HCT116 (cell line): ENCODE measurements at regions of chr12 and their contacts with region 1.

Region 1: DNA sequence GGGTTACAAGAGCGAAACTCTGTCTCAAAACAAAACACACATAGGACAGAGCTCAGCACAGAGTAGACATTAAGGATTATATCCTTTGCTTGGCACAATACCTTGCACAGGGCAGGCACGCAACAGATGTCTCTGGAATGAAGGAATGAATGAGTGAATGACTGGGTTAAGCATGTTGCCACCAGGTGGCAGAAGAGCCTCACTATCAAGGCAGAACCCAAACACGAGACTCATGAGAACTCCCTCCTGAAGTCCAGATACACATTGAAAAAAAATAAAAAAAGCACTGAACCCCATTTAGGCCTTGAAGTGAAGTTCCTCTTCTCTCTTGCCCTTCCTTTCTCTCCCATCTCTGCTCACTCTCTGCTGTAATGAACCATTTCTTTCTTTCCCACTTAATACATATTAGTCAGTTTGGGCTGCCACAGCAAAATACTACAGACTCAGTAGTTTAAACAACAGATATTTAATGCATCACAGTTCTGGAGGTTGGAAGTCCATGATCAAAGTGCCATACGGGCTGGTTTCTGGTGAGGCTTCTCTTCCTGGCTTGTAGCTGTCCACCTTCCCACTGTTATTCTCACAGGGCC is 26.6 kb upstream of the LTA4H start:
- DNase-seq: peak; percentile 81
- ATAC-seq: peak; percentile 96
- H3K4me3 ChIP-seq: no peak overlapping the region
- H3K27ac ChIP-seq: no peak overlapping the region
- H3K4me1 ChIP-seq: no peaks in the 10 kb centered on the region
- H3K27me3 ChIP-seq: no peaks in the 10 kb centered on the region
- CTCF ChIP-seq: peak; percentile 76 to 87 (median 84)
- POLR2A ChIP-seq: no peak
- RAD21 ChIP-seq: peak; percentile 98

Region 2: DNA sequence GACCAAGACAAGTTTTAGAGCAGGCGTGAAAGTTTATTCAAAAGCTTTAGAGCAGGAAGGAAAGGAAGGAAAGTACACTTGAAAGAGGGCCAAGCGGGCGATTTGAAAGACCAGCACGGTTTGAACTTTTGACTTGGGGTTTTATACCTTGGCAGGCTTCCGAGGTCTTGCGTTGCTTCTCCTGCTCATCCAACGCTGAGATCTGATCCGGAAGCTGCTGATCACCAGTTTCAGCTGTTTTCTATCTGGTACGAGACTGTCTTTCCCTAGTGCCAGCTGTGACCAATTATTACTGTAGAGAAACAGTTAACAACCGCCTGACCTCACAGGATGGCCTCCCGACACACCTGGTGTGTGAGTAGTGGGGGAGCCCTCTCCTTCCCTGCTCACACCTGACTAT is 223.8 kb before region 1 on chr12:
- CTCF ChIA-PET with region 1: no interaction called
- POLR2A ChIA-PET with region 1: no interaction called
- RAD21 ChIA-PET with region 1: no interaction called
- intact Hi-C with region 1: no loop called
- DNase-seq: no peak
- ATAC-seq: no peak
- H3K4me3 ChIP-seq: no peak overlapping the region
- H3K27ac ChIP-seq: no peak overlapping the region
- H3K4me1 ChIP-seq: peaks cover 7 to 26% of the 10 kb centered on the region in 2 experiments; a peak in 3 of 4 replicates
- H3K27me3 ChIP-seq: no peaks in the 10 kb centered on the region
- CTCF ChIP-seq: no peak
- POLR2A ChIP-seq: no peak
- RAD21 ChIP-seq: no peak

Region 3: GRCh38 chr12:95986635-95987570 is 75.1 kb before region 1 on chr12:
- CTCF ChIA-PET with region 1: no interaction called
- POLR2A ChIA-PET with region 1: no interaction called
- RAD21 ChIA-PET with region 1: no interaction called
- intact Hi-C with region 1: no loop called
- DNase-seq: no peak
- ATAC-seq: no peak
- H3K4me3 ChIP-seq: no peak overlapping the region
- H3K27ac ChIP-seq: no peak overlapping the region
- H3K4me1 ChIP-seq: no peaks in the 10 kb centered on the region
- H3K27me3 ChIP-seq: no peaks in the 10 kb centered on the region
- CTCF ChIP-seq: no peak
- POLR2A ChIP-seq: no peak
- RAD21 ChIP-seq: no peak

Region 4: DNA sequence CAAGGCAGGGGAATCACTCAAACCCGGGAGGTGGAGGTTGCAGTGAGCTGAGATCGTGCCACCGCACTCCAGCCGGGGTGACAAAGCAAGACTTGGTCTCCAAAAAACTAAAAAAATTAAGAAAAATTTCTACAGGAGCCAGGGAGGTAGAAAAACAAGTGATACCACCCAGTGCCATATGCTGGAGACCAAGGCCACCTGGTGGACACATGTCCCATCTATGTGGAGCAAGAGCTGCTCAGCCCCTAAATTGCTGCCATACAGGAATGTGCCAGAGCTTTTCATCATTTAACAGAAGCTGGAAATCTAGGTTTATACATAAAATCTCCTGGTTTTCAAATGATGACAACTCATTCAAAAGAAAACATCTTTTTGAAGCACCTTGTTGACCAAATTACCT is 70.9 kb after region 1 on chr12:
- CTCF ChIA-PET with region 1: interaction called, 3 read pairs
- POLR2A ChIA-PET with region 1: no interaction called
- RAD21 ChIA-PET with region 1: no interaction called
- intact Hi-C with region 1: loop called (anchors 5 kb)
- DNase-seq: no peak
- ATAC-seq: peak; percentile 64
- H3K4me3 ChIP-seq: no peak overlapping the region
- H3K27ac ChIP-seq: no peak overlapping the region
- H3K4me1 ChIP-seq: peaks cover 0 to 22% of the 10 kb centered on the region in 2 experiments; a peak in 1 of 4 replicates
- H3K27me3 ChIP-seq: 0 out of 2 replicates have a peak, but pooled peaks cover 6% of the 10 kb centered on the region
- CTCF ChIP-seq: peak; percentile 41 to 51 (median 42); a peak in 4 of 6 replicates
- POLR2A ChIP-seq: no peak
- RAD21 ChIP-seq: peak; percentile 67

Region 5: GRCh38 chr12:96194971-96195844 is 133.2 kb after region 1 on chr12:
- CTCF ChIA-PET with region 1: no interaction called
- POLR2A ChIA-PET with region 1: no interaction called
- RAD21 ChIA-PET with region 1: no interaction called
- intact Hi-C with region 1: loop called (anchors 5 kb)
- DNase-seq: peak; percentile 75
- ATAC-seq: peak; percentile 37
- H3K4me3 ChIP-seq: peak overlapping the region; percentile 86 to 88
- H3K27ac ChIP-seq: peak overlapping the region; percentile 94
- H3K4me1 ChIP-seq: peaks cover 43 to 54% of the 10 kb centered on the region in 2 experiments
- H3K27me3 ChIP-seq: no peaks in the 10 kb centered on the region
- CTCF ChIP-seq: no peak
- POLR2A ChIP-seq: no peak
- RAD21 ChIP-seq: no peak

Region 6: GRCh38 chr12:96219698-96220206 is 157.8 kb after region 1 on chr12:
- CTCF ChIA-PET with region 1: interaction called, 17 read pairs
- POLR2A ChIA-PET with region 1: no interaction called
- RAD21 ChIA-PET with region 1: no interaction called
- intact Hi-C with region 1: loop called (anchors 1 kb)
- DNase-seq: peak; percentile 90
- ATAC-seq: peak; percentile 97
- H3K4me3 ChIP-seq: peak overlapping the region; percentile 33 to 46
- H3K27ac ChIP-seq: peak overlapping the region; percentile 84
- H3K4me1 ChIP-seq: peaks cover 18 to 44% of the 10 kb centered on the region in 2 experiments
- H3K27me3 ChIP-seq: no peaks in the 10 kb centered on the region
- CTCF ChIP-seq: no peak
- POLR2A ChIP-seq: no peak
- RAD21 ChIP-seq: no peak

Region 7: DNA sequence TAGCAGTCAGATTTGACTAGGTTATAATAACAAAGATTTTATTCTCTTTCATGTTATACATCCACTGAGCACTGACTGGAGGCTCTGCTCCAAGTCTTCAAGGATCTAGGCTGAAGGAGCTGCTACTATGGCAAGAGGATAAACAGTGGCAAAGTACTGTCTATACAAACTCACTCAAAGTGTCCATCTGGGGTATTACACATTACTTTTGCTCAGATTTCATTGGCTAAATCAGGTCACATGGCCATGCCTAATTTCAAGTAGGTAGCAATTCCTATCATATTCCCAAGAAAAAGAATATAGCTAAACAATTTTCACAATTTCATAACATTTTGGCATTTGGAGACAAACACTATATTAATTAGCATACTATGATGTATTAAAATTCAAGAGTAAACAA is 297.4 kb after region 1 on chr12:
- CTCF ChIA-PET with region 1: no interaction called
- POLR2A ChIA-PET with region 1: no interaction called
- RAD21 ChIA-PET with region 1: no interaction called
- intact Hi-C with region 1: no loop called
- DNase-seq: no peak
- ATAC-seq: no peak
- H3K4me3 ChIP-seq: no peak overlapping the region
- H3K27ac ChIP-seq: no peak overlapping the region
- H3K4me1 ChIP-seq: peaks cover 0 to 3% of the 10 kb centered on the region in 2 experiments; a peak in 1 of 4 replicates
- H3K27me3 ChIP-seq: no peaks in the 10 kb centered on the region
- CTCF ChIP-seq: peak in 1 of 3 experiments; percentile 22; a peak in 1 of 6 replicates
- POLR2A ChIP-seq: no peak
- RAD21 ChIP-seq: no peak

Region 8: DNA sequence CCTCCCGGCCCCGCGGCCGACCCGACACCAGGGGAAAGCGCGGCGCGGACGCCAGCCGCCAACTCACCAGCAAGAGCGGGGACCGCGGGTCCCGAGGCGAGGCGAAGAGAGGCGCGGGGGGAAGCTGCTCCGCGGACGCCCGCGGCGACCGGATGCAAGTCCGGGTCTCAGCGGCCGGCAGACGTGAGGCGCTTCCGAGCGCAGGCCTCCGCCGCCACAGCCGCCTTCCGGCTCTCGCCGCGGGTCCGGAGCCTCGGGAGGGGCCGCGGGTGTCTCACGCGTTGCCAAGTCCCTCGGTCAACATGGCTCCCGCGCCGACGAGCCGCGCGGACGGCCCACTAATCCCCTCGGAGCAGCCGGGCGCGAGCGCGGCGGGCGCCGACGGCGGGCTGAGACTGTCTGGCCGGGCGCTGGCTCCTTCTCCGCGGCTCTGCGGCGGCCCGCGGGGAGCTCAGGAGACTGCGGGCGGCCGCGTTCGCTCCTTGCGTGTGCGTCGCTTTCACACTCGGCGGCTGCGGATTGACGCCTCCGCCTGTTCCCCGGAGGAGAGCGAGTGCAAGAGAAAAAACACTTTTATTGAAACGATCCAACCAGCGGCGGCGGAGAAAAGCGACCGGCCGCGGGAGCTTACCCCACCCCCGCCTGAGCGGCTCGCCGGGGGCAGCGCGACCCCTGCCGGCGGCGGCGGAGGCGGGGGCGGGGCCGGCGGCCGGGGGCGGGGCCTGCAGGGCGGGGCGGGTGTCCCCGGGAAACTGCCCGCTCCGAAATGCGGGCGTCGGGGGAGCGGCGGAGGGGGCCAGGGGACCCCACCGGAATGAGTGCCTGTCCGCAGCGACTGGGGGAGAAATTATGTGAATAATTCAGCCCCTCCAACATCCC is 338.2 kb after region 1 on chr12 and contains the start of gene CDK17:
- CTCF ChIA-PET with region 1: no interaction called
- POLR2A ChIA-PET with region 1: no interaction called
- RAD21 ChIA-PET with region 1: no interaction called
- intact Hi-C with region 1: loop called (anchors 2 kb)
- DNase-seq: peak; percentile 50
- ATAC-seq: peak; percentile 76
- H3K4me3 ChIP-seq: peak within 1 kb of the TSS; percentile 59 to 70
- H3K27ac ChIP-seq: peak within 1 kb of the TSS; percentile 98
- H3K4me1 ChIP-seq: peaks cover 10 to 20% of the 10 kb centered on the region in 2 experiments; a peak in 3 of 4 replicates
- H3K27me3 ChIP-seq: no peaks in the 10 kb centered on the region
- CTCF ChIP-seq: peak in 1 of 3 experiments; percentile 39; a peak in 1 of 6 replicates
- POLR2A ChIP-seq: peak; percentile 39
- RAD21 ChIP-seq: peak; percentile 49
- total RNA-seq, gene CDK17: 21.4 TPM